ENCODE measurements at regions of chr12 and their contacts with region 1.

Region 1: GRCh38 chr12:89709157-89709994 is 738 bp upstream of the ATP2B1 start:
- DNase-seq: peak; percentile 99
- H3K4me3 Mint-ChIP-seq: peak overlapping the region; percentile 84
- H3K27ac Mint-ChIP-seq: peak overlapping the region; percentile 87
- H3K4me1 Mint-ChIP-seq: peaks cover 28% of the 10 kb centered on the region
- H3K27me3 Mint-ChIP-seq: peaks cover 33% of the 10 kb centered on the region

Region 2: GRCh38 chr12:89019408-89020120 is 689.8 kb before region 1 on chr12:
- intact Hi-C with region 1: loop called (anchors 5 kb)
- DNase-seq: peak; percentile 94
- H3K4me3 Mint-ChIP-seq: no peak overlapping the region
- H3K27ac Mint-ChIP-seq: no peak overlapping the region
- H3K4me1 Mint-ChIP-seq: peaks cover 18% of the 10 kb centered on the region
- H3K27me3 Mint-ChIP-seq: peaks cover 5% of the 10 kb centered on the region

Region 3: DNA sequence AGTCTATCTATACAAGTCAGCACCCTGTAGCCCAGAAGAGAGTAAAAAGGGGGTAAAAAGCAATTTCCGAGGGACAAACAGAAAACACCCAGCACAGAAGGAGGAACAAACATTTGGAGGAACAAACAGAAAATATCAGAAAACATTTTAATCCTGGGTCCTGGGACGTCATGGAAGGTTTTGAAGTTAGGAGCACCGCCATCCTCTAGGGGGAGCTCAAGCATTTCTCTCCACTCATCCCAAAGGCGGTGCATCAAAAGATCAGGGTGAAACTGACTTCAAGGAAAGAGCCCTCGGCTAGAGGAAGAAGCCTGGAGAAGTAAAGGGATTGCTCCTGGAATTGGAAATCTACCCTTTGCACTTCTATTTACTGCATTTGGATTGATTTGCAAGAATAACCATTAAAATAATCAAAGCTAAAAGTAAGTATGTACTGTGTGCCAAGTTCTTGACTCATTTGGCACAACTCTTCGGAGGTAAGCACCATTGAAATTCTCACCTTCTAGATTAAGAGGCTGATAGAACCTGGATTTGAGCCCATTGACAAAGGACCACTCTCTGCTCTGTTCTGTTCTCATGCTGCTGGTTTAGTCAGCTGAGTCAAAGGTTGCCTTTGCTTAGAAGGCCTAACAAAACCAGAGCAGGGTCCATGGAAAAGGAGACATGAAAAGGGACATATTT is 166.3 kb before region 1 on chr12:
- intact Hi-C with region 1: loop called (anchors 5 kb)
- DNase-seq: peak; percentile 88
- H3K4me3 Mint-ChIP-seq: no peak overlapping the region
- H3K27ac Mint-ChIP-seq: no peak overlapping the region
- H3K4me1 Mint-ChIP-seq: peaks cover 5% of the 10 kb centered on the region
- H3K27me3 Mint-ChIP-seq: no peaks in the 10 kb centered on the region

Region 4: DNA sequence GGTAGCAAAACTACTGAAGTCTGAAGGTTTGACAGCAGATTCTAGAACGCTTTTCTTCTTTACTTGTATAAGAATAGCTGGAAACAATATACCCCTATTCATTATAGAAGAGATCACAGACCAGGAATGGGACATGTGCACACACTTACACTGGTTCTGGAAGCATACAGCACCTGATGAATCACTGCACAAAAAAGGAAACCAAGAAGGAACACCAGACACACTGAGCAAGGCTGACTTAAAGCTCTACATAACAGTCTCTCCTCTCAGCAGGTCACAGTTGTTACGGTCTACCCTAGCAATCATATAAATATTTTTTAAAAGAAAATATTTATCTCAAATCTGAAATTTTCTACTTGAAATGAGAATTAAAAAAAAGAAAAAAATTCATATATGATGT is 14.3 kb before region 1 on chr12:
- intact Hi-C with region 1: no loop called
- DNase-seq: no peak
- H3K4me3 Mint-ChIP-seq: no peak overlapping the region
- H3K27ac Mint-ChIP-seq: no peak overlapping the region
- H3K4me1 Mint-ChIP-seq: peaks cover 9% of the 10 kb centered on the region
- H3K27me3 Mint-ChIP-seq: no peaks in the 10 kb centered on the region

Region 5: DNA sequence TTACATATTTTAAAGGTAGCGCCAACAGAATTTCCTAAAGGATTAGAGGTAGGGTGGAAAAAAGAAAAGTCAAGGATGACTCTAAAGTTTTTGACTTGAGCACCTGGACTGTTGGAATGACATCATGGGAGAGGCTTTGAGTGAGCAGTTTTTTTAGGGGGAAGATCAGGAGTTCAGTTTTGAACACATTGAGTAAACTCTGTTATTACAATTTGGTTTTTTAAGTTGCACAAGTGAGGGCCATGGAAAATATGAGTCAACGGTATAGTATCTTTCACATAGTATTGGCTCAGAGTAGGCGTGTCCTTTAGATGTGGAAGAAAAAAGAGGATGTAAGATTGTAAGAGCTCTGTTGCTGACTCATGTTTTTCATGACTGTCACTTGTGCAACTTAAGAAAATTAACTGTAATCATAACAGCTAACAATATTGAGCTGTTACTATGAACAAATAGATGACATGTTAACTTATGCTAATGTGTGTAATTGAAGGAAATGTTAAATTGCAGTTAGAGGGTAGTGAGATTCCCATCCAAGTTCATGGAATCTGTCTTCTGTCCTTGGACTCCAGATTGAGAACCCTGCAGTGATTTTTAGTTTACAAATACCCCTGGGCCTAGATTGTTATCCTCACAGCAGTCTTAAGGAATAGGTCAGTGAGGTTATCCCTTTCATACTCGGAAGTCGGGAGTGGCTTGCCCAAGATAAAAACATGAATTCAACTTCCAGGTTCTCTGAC is 47.4 kb after region 1 on chr12:
- intact Hi-C with region 1: loop called (anchors 1 kb)
- DNase-seq: peak; percentile 78
- H3K4me3 Mint-ChIP-seq: peak overlapping the region; percentile 10
- H3K27ac Mint-ChIP-seq: peak overlapping the region; percentile 77
- H3K4me1 Mint-ChIP-seq: peaks cover 22% of the 10 kb centered on the region
- H3K27me3 Mint-ChIP-seq: peaks cover 2% of the 10 kb centered on the region

Region 6: DNA sequence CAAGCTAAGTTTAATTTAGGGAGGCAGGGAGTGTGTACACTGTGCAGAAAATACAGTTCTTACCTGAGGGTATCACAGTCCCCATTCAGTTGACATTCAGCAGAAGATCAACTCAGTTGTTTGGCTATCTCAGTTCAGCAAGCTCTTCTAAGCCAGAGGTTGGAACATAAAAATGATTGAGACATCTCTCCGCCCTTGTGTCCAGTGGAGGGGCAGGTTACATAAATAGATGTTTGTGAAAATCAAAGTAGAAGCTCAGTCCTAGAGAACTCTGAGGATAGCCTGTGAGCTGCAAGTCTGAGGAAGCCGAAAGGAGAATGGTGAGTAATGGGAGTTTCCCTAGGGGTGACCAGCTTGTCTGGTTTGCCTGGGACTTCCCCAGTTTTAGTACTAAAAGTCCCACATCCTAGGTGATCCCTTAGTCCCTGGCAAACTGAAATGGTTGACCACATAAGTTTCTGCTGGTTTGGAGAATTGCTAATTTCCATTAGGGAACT is 250.7 kb after region 1 on chr12:
- intact Hi-C with region 1: loop called (anchors 5 kb)
- DNase-seq: peak; percentile 63
- H3K4me3 Mint-ChIP-seq: peak overlapping the region; percentile 39
- H3K27ac Mint-ChIP-seq: no peak overlapping the region
- H3K4me1 Mint-ChIP-seq: peaks cover 12% of the 10 kb centered on the region
- H3K27me3 Mint-ChIP-seq: peaks cover 10% of the 10 kb centered on the region